Activated T-helper 1 cell treated with anti-CD3 and anti-CD28 coated beads, Interleukin-12 subunit alpha, Interleukin-12 subunit beta, Interleukin-2, Interleukin-4 antibody, amounts not matched to agents 30 ng/mL and 10 ng/mL and 1 ng/mL, durations not matched to agents 14 hours and 24 hours and 36 hours (primary cell): ENCODE measurements at regions of chr18 and their contacts with region 1.

Region 1: GRCh38 chr18:2906704-2907549 is 60.1 kb downstream of the EMILIN2 start:
- DNase-seq: peak; percentile 56
- H3K4me3 Mint-ChIP-seq: peak overlapping the region; percentile 84
- H3K27ac Mint-ChIP-seq: peak overlapping the region; percentile 65
- H3K4me1 Mint-ChIP-seq: peaks cover 22% of the 10 kb centered on the region
- H3K27me3 Mint-ChIP-seq: no peaks in the 10 kb centered on the region

Region 2: GRCh38 chr18:2571200-2572143 is 335.5 kb before region 1 on chr18 and contains the starts of genes METTL4 and NDC80:
- intact Hi-C with region 1: loop called (anchors 10 kb)
- DNase-seq: peak; percentile 79
- H3K4me3 Mint-ChIP-seq: peak within 1 kb of the TSS; percentile 97
- H3K27ac Mint-ChIP-seq: peak within 1 kb of the TSS; percentile 97
- H3K4me1 Mint-ChIP-seq: peaks cover 66% of the 10 kb centered on the region
- H3K27me3 Mint-ChIP-seq: no peaks in the 10 kb centered on the region
- total RNA-seq, gene METTL4: 15.0 and 26.2 TPM in 2 replicates
- total RNA-seq, gene NDC80: 41.2 and 42.6 TPM in 2 replicates

Region 3: DNA sequence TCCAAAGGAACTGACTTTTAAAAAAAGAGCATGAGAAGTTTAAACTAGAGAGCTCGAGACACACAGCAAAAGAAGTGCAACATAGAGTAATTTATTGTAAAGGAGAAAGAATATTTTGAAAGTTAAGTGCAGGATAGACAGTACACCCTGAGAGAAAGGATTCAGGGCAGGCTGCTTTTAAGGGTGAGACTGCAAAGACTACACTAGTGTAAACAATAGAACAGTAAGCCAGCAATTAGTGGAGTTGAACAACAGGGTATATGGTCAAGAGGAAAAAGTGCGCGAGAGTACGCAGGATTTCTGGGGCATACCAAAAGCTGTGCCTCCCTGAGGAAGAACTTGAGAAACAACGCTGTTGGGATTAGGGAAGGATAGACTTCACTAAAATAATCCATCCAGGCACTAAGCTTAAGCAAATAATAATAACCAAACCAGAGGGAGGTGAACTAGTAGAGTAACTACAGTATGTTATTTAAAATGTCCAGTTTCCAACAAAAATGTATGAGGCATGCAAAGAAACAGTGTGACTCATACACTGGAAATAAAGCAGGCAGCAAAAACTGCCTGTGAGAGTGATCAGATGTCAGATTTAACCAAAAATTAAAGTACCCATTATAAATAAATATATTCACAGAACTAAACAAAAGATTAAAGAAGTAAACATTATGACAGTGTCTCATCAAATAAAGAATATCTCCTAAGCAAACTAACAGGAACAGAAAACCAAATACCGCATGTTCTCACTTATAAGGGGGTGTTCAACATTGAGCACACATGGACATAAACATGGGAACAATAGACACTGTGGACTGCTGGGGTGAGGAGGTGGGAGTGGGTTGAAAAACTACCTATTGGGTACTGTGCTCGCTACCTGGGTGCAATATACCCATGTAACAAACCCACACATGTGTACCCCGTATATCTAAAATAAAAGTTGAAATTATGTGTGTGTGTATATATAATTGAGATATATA is 100.7 kb before region 1 on chr18:
- intact Hi-C with region 1: loop called (anchors 5 kb)
- DNase-seq: no peak
- H3K4me3 Mint-ChIP-seq: no peak overlapping the region
- H3K27ac Mint-ChIP-seq: no peak overlapping the region
- H3K4me1 Mint-ChIP-seq: no peaks in the 10 kb centered on the region
- H3K27me3 Mint-ChIP-seq: no peaks in the 10 kb centered on the region

Region 4: GRCh38 chr18:2846636-2847364 is 60.1 kb before region 1 on chr18 and contains the start of gene EMILIN2:
- intact Hi-C with region 1: loop called (anchors 2 kb)
- DNase-seq: peak; percentile 3
- H3K4me3 Mint-ChIP-seq: peak within 1 kb of the TSS; percentile 89
- H3K27ac Mint-ChIP-seq: peak within 1 kb of the TSS; percentile 82
- H3K4me1 Mint-ChIP-seq: peaks cover 26% of the 10 kb centered on the region
- H3K27me3 Mint-ChIP-seq: peaks cover 50% of the 10 kb centered on the region
- total RNA-seq, gene EMILIN2: 26.1 and 28.0 TPM in 2 replicates

Region 5: GRCh38 chr18:2883076-2883735 is 23.7 kb before region 1 on chr18:
- intact Hi-C with region 1: loop called (anchors 2 kb)
- DNase-seq: peak; percentile 43
- H3K4me3 Mint-ChIP-seq: peak overlapping the region; percentile 48
- H3K27ac Mint-ChIP-seq: peak overlapping the region; percentile 89
- H3K4me1 Mint-ChIP-seq: peaks cover 30% of the 10 kb centered on the region
- H3K27me3 Mint-ChIP-seq: peaks cover 4% of the 10 kb centered on the region

Region 6: DNA sequence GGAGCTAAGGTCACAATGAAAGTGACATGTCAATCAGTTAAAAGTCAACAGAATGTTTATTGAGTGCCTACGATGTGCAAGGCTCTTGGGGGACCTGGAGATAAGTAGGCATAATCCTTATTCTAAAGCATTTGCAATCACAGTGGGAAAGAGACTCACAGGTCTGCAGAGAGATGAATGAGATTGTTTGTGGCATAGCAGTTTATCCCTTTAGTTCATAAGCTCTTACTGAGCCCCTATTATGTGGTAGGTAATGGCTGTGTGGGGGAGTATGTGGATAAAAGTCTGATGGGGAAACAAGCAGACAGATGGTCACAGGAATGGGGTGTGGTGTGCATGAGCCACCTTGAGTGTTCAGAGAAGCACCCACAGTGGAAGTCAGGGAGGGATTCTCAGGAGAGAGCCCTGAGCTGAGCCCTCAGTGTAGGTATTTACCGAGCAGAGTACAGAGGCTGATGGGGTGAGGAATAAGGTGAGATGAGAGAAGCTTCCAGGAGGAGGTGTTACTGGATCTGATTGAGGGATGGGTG is 12.0 kb before region 1 on chr18:
- intact Hi-C with region 1: loop called (anchors 1 kb)
- DNase-seq: no peak
- H3K4me3 Mint-ChIP-seq: no peak overlapping the region
- H3K27ac Mint-ChIP-seq: no peak overlapping the region
- H3K4me1 Mint-ChIP-seq: peaks cover 48% of the 10 kb centered on the region
- H3K27me3 Mint-ChIP-seq: no peaks in the 10 kb centered on the region

Region 7: DNA sequence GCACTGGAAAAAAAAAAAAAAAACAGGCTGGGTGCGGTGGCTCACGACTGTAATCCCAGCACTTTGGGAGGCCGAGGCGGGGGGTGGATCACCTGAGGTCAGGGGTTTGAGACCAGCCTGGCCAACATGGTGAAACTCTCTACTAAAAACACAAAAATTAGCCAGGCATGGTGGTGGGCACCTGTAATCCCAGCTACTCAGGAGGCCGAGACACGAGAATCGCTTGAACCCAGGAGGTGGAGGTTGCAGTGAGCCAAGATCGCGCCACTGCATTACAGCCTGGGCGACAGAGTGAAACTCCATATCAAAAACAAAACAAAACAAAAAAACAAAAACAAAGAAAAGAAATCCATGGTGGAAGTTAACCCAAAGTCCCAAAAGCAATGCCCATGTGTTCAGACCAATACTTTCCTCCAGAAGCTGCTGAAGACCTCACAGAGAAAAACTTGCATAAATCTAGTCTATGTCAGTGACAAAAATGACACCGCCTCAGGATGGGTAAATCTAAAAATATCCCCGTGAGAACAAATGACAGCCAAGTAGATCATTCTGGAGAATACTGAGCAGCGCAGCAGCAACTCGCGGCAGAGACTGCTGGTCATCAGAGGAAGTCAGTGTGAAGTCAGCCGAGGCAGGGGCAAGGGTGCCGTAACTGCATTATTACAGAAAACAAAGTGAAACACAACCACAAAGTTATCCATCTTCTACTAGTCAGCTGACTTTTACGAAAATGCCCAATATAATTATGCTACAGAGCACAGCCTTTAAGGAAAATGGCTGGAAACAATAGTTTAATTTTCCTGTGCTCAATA is 65.0 kb after region 1 on chr18:
- intact Hi-C with region 1: loop called (anchors 2 kb)
- DNase-seq: peak; percentile 62
- H3K4me3 Mint-ChIP-seq: peak overlapping the region; percentile 82
- H3K27ac Mint-ChIP-seq: peak overlapping the region; percentile 95
- H3K4me1 Mint-ChIP-seq: peaks cover 82% of the 10 kb centered on the region
- H3K27me3 Mint-ChIP-seq: no peaks in the 10 kb centered on the region

Region 8: GRCh38 chr18:3008541-3008940 is 101.6 kb after region 1 on chr18:
- intact Hi-C with region 1: no loop called
- DNase-seq: no peak
- H3K4me3 Mint-ChIP-seq: no peak overlapping the region
- H3K27ac Mint-ChIP-seq: peak overlapping the region; percentile 19
- H3K4me1 Mint-ChIP-seq: peaks cover 58% of the 10 kb centered on the region
- H3K27me3 Mint-ChIP-seq: no peaks in the 10 kb centered on the region